Cardiac septum (tissue), 1 donor: ENCODE measurements at regions of chr5 and their contacts with region 1.

Region 1: GRCh38 chr5:118377420-118377819 is 610.9 kb downstream of the DTWD2 start:
- DNase-seq: no peak

Region 2: GRCh38 chr5:118208031-118208453 is 169.4 kb before region 1 on chr5:
- intact Hi-C with region 1: no loop called
- DNase-seq: no peak

Region 3: GRCh38 chr5:118392491-118392890 is 15.1 kb after region 1 on chr5:
- intact Hi-C with region 1: loop called (anchors 2 kb)
- DNase-seq: no peak